Dorsolateral prefrontal cortex (tissue), 120 donors: ENCODE measurements at regions of chr12 and their contacts with region 1.

Region 1: DNA sequence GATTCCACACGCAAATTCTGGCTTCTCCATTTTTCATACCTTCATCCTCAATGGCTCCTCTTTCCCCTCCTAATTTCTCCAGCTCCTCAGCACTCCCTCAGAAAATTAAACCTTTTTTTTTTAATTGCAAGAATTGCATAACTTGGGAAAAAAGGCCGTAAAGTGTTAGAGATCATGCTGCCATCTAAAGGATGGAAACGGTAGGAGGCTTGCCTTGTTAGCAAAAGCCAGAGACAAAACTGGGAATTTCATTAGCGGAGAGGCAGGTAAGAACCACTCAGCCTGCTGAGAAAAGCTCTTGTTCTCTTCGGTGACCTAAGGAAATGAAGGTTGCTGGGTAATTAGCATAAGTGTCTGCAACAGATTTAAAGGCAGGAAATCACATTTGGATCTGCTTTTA is 204.3 kb downstream of the AEBP2 start:
- DNase-seq: no peak
- H3K4me3 ChIP-seq: no peak overlapping the region
- H3K27ac ChIP-seq: no peak overlapping the region
- H3K27me3 ChIP-seq: no peaks in the 10 kb centered on the region
- CTCF ChIP-seq: peak in 54 of 56 donors; percentile 35 to 76 (median 58)

Region 2: DNA sequence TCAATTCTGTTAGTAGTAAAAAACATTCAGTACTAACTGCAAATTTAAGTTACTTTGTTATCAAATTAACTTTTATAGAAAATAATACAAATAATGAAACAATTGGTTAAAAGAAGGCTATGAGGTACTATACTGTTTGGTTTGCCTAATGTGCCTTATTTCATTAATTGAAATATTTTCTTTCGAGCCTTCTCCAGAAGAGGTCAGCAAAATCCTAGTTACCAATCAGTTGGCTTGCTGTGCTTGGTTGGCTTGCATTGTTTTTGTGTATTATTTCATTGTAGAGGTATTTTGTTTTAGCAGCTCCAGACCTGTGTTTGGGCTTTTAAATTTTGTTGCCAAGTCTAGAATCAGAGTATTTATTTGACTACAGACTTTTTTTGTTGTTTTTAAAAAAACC is 135.8 kb before region 1 on chr12:
- intact Hi-C with region 1: loop called in 1 of 2 experiments (anchors 5 kb)
- DNase-seq: no peak
- H3K4me3 ChIP-seq: no peak overlapping the region
- H3K27ac ChIP-seq: peak overlapping the region in 2 of 59 donors; percentile 17 to 41
- H3K27me3 ChIP-seq: no peaks in the 10 kb centered on the region
- CTCF ChIP-seq: peak in 49 of 56 donors; percentile 13 to 69 (median 41)

Region 3: DNA sequence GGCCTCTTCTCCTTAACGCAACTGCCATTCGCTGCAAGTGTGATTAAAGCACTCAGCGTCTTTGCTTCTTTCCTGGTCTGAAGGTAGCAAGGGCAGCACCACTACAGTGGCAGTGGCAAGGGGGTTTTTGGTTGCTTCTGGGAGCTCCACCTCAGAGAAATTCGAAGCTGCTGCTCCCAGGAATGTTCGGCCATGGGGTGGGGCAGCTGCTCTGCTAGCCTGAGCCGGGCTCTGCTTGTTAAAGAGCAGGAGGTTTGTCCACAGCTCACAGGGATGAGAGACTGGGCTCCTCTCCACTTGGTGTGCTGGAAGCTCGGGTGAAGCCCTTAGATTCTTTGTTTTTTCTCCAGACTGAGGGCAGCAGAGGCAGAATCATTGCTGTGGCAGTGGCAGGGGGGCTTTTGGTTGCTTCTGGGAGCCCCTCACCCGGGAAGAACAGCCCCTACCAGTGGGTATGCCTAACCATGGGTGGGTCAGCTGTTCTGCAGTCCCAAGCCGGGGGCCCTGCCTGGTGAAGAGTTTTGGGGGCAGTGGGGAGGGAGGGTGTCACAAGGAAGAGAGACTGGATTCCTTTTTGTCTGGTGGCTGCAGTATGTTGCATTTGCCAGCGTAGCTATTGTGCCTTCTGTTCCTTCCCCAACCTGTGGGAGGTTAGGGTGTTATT is 135.9 kb after region 1 on chr12:
- intact Hi-C with region 1: no loop called
- DNase-seq: no peak
- H3K4me3 ChIP-seq: no peak overlapping the region
- H3K27ac ChIP-seq: peak overlapping the region in 7 of 59 donors; percentile 16 to 55 (median 42)
- H3K27me3 ChIP-seq: no peaks in the 10 kb centered on the region
- CTCF ChIP-seq: no peak